WTC11 (cell line): ENCODE measurements at regions of chr17 and their contacts with region 1.

Region 1: GRCh38 chr17:49556223-49556971 is 19.3 kb upstream of the NXPH3 start:
- DNase-seq: peak; percentile 94
- ATAC-seq: peak; percentile 89
- H3K4me3 Mint-ChIP-seq: no peak overlapping the region
- H3K27ac Mint-ChIP-seq: no peak overlapping the region
- H3K4me1 Mint-ChIP-seq: peaks cover 13% of the 10 kb centered on the region
- H3K27me3 Mint-ChIP-seq: peaks cover 8% of the 10 kb centered on the region
- CTCF ChIP-seq: peak; percentile 96

Region 2: GRCh38 chr17:49399995-49400394 is 156.4 kb before region 1 on chr17:
- CTCF ChIA-PET with region 1: interaction called, 36 read pairs
- POLR2A ChIA-PET with region 1: no interaction called
- DNase-seq: no peak
- ATAC-seq: no peak
- H3K4me3 Mint-ChIP-seq: no peak overlapping the region
- H3K27ac Mint-ChIP-seq: no peak overlapping the region
- H3K4me1 Mint-ChIP-seq: 0 out of 2 replicates have a peak, but pooled peaks cover 4% of the 10 kb centered on the region
- H3K27me3 Mint-ChIP-seq: no peaks in the 10 kb centered on the region
- CTCF ChIP-seq: no peak

Region 3: GRCh38 chr17:49434821-49435670 is 121.4 kb before region 1 on chr17:
- CTCF ChIA-PET with region 1: interaction called, 106 read pairs
- POLR2A ChIA-PET with region 1: no interaction called
- DNase-seq: peak; percentile 87
- ATAC-seq: peak; percentile 70
- H3K4me3 Mint-ChIP-seq: no peak overlapping the region
- H3K27ac Mint-ChIP-seq: no peak overlapping the region
- H3K4me1 Mint-ChIP-seq: peaks cover 26% of the 10 kb centered on the region
- H3K27me3 Mint-ChIP-seq: peaks cover 21% of the 10 kb centered on the region
- CTCF ChIP-seq: peak; percentile 96

Region 4: GRCh38 chr17:49496183-49496866 is 60.1 kb before region 1 on chr17:
- CTCF ChIA-PET with region 1: interaction called, 97 read pairs
- POLR2A ChIA-PET with region 1: no interaction called
- DNase-seq: peak; percentile 90
- ATAC-seq: peak; percentile 69
- H3K4me3 Mint-ChIP-seq: peak overlapping the region; percentile 85
- H3K27ac Mint-ChIP-seq: no peak overlapping the region
- H3K4me1 Mint-ChIP-seq: peaks cover 31% of the 10 kb centered on the region
- H3K27me3 Mint-ChIP-seq: peaks cover 75% of the 10 kb centered on the region
- CTCF ChIP-seq: peak; percentile 87

Region 5: GRCh38 chr17:49523706-49524472 is 32.5 kb before region 1 on chr17:
- CTCF ChIA-PET with region 1: interaction called, 33 read pairs
- POLR2A ChIA-PET with region 1: no interaction called
- DNase-seq: peak; percentile 9
- ATAC-seq: no peak
- H3K4me3 Mint-ChIP-seq: no peak overlapping the region
- H3K27ac Mint-ChIP-seq: no peak overlapping the region
- H3K4me1 Mint-ChIP-seq: peaks cover 3% of the 10 kb centered on the region; the same call in 1 of the 2 replicates
- H3K27me3 Mint-ChIP-seq: no peaks in the 10 kb centered on the region; the same call in 1 of the 2 replicates
- CTCF ChIP-seq: no peak

Region 6: GRCh38 chr17:49687878-49688491 is 131.6 kb after region 1 on chr17:
- CTCF ChIA-PET with region 1: interaction called, 14 read pairs
- POLR2A ChIA-PET with region 1: no interaction called
- DNase-seq: no peak
- ATAC-seq: no peak
- H3K4me3 Mint-ChIP-seq: no peak overlapping the region
- H3K27ac Mint-ChIP-seq: no peak overlapping the region
- H3K4me1 Mint-ChIP-seq: peaks cover 23% of the 10 kb centered on the region
- H3K27me3 Mint-ChIP-seq: peaks cover 2% of the 10 kb centered on the region; the same call in 1 of the 2 replicates
- CTCF ChIP-seq: no peak

Region 7: GRCh38 chr17:49715717-49716279 is 159.4 kb after region 1 on chr17:
- CTCF ChIA-PET with region 1: no interaction called
- POLR2A ChIA-PET with region 1: no interaction called
- DNase-seq: no peak
- ATAC-seq: no peak
- H3K4me3 Mint-ChIP-seq: no peak overlapping the region
- H3K27ac Mint-ChIP-seq: no peak overlapping the region
- H3K4me1 Mint-ChIP-seq: no peaks in the 10 kb centered on the region
- H3K27me3 Mint-ChIP-seq: no peaks in the 10 kb centered on the region
- CTCF ChIP-seq: no peak